Endothelial cell of umbilical vein (primary cell): ENCODE measurements at regions of chr9 and their contacts with region 1.

Region 1: DNA sequence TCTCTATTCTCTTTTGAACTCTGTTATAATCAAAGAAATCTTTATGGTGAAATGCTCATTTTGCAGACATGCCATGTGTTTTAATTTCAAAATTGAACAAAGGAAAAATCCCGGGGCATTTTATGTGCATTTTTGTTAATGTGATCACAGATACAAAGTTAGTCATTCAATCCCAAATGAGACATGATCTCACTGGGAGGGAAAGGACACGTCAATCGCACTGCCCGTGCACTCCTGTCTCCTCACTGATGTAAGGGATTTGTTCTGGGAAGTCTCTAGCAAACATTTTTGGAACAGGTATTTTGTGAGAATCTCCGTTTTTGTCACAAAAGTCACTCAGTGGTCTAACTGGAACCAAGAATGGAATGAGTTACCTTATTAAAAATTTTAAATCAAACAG is 97.9 kb upstream of the RANBP6 start:
- DNase-seq: no peak
- H3K4me3 ChIP-seq: no peak overlapping the region
- H3K27ac ChIP-seq: no peak overlapping the region
- H3K4me1 ChIP-seq: no peaks in the 10 kb centered on the region
- H3K27me3 ChIP-seq: no peaks in the 10 kb centered on the region
- CTCF ChIP-seq: no peak
- POLR2A ChIP-seq: no peak

Region 2: GRCh38 chr9:5825223-5825622 is 288.1 kb before region 1 on chr9:
- CTCF ChIA-PET with region 1: no interaction called
- POLR2A ChIA-PET with region 1: no interaction called
- dilution Hi-C with region 1: no loop called
- intact Hi-C with region 1: no loop called
- DNase-seq: no peak
- H3K4me3 ChIP-seq: no peak overlapping the region
- H3K27ac ChIP-seq: no peak overlapping the region
- H3K4me1 ChIP-seq: no peaks in the 10 kb centered on the region
- H3K27me3 ChIP-seq: no peaks in the 10 kb centered on the region
- CTCF ChIP-seq: no peak
- POLR2A ChIP-seq: no peak

Region 3: GRCh38 chr9:6068983-6069382 is 44.3 kb before region 1 on chr9:
- CTCF ChIA-PET with region 1: no interaction called
- POLR2A ChIA-PET with region 1: no interaction called
- dilution Hi-C with region 1: no loop called
- intact Hi-C with region 1: loop called (anchors 1 kb)
- DNase-seq: no peak
- H3K4me3 ChIP-seq: no peak overlapping the region
- H3K27ac ChIP-seq: no peak overlapping the region
- H3K4me1 ChIP-seq: no peaks in the 10 kb centered on the region
- H3K27me3 ChIP-seq: peaks cover 2 to 11% of the 10 kb centered on the region in 2 experiments
- CTCF ChIP-seq: no peak
- POLR2A ChIP-seq: no peak